ENCODE measurements at regions of chr2 and their contacts with region 1.

Region 1: DNA sequence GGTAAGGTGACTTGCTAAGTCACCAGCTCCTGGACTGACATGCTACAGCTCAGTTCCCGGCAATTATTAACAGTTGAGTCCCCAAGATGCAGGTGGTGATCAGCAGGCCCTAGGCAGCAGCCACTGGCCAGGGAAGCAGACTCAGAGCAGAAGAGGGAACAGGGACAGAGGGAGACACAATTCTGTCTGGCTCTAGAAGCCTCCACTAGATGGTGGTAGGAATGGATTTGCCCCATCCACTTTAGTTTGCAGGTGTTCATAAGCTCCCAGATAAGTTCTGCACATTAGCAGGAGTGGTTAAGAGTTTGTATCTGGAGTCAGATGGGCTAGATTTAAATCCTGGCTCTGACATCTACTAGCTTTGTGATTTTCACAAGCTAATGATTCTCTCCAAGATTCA is 25.5 kb upstream of the SLC1A4 start:
- DNase-seq: no peak
- H3K4me3 ChIP-seq: no peak overlapping the region
- CTCF ChIP-seq: no peak

Region 2: GRCh38 chr2:64952511-64953482 is 10.9 kb before region 1 on chr2:
- CTCF ChIA-PET with region 1: interaction called, 10 read pairs
- POLR2A ChIA-PET with region 1: no interaction called
- DNase-seq: peak; percentile 67
- H3K4me3 ChIP-seq: no peak overlapping the region
- CTCF ChIP-seq: no peak

Region 3: DNA sequence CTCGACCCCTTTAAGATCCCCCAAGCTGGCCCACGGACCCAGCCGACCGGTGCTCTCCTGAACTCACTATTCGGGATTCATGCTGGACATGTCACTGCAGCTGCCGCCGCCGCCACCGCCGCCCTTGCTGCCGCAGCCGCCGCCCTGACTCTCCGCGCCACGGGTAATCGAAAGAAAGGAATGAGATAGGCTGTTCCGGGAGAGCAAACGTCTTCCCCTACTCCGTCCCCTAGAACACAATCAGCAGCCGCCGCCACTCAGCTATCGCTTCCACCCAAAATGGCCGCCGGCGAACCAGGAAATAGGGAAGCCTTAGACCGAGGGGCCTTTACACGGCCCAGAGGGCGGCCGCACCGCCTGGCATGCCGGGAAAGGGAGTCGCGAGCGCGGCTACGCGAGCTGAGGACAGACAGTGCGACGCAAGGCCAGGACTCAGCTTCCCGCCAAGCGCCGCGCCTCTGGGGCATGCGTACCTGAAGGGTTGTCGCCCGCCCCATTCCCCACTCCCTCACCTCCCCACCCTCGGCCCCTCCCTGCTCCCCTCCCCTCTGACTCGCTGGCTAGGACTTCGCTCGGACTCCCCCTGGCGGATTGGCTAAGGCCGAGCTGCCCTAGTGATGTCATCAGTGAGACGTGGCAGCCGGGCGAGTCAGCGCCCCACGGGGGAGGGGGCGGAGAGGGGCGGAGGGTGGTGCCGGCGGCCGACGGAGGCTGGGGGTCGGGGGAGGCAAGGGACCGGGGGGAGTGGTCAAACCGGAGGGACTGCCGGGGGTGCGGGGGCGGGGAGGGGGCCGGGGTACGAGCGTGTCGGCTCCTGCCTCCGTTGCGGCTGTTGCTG is 166.3 kb after region 1 on chr2 and contains the start of gene RAB1A:
- CTCF ChIA-PET with region 1: no interaction called
- POLR2A ChIA-PET with region 1: no interaction called
- DNase-seq: peak; percentile 98
- H3K4me3 ChIP-seq: peak within 1 kb of the TSS; percentile 85
- CTCF ChIP-seq: peak; percentile 73